MCF 10A (cell line): ENCODE measurements at regions of chr16 and their contacts with region 1.

Region 1: GRCh38 chr16:77171745-77172635 is 19.0 kb upstream of the MON1B start:
- DNase-seq: peak; percentile 77
- H3K4me3 Mint-ChIP-seq: no peak overlapping the region
- H3K27ac Mint-ChIP-seq: no peak overlapping the region
- H3K4me1 Mint-ChIP-seq: no peaks in the 10 kb centered on the region
- H3K27me3 Mint-ChIP-seq: no peaks in the 10 kb centered on the region
- CTCF ChIP-seq: peak; percentile 77

Region 2: GRCh38 chr16:75801307-75801706 is 1370.7 kb before region 1 on chr16:
- CTCF ChIA-PET with region 1: interaction called, 47 read pairs
- POLR2A ChIA-PET with region 1: no interaction called
- intact Hi-C with region 1: loop called (anchors 5 kb)
- DNase-seq: peak; percentile 22
- H3K4me3 Mint-ChIP-seq: no peak overlapping the region
- H3K27ac Mint-ChIP-seq: no peak overlapping the region
- H3K4me1 Mint-ChIP-seq: peaks cover 5% of the 10 kb centered on the region
- H3K27me3 Mint-ChIP-seq: no peaks in the 10 kb centered on the region
- CTCF ChIP-seq: peak; percentile 48

Region 3: DNA sequence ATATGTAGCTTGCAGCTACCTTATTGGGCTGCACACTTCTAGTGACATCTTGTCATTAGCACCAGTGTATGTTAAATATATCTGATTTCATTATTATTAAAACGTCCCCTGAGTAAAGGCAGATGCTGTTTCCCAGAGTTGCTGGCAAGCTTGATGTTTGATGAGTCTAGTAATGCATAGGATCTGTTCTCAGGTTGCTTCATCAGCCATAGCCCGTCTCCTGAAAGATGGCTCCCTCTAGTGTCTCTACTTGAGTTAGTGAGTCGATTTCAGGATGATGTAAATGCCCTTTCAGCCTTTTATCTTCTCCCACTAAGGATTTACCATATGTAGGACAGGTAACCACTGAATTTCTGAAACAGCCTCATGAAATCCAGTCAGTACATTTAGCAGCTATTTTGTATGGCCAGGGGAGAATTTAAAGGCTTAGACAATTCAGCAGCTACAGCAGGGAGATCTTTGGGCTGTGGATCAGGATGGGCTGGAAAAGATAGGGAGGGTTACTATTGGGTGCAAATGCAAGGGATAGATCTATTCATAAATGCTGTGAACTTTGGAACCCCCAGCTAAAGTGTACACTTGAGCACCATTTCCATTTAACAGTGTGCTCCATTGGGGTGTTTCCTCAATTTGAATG is 518.5 kb before region 1 on chr16:
- CTCF ChIA-PET with region 1: interaction called, 43 read pairs
- POLR2A ChIA-PET with region 1: no interaction called
- intact Hi-C with region 1: loop called (anchors 1 kb)
- DNase-seq: peak; percentile 79
- H3K4me3 Mint-ChIP-seq: no peak overlapping the region
- H3K27ac Mint-ChIP-seq: no peak overlapping the region
- H3K4me1 Mint-ChIP-seq: peaks cover 11% of the 10 kb centered on the region
- H3K27me3 Mint-ChIP-seq: no peaks in the 10 kb centered on the region
- CTCF ChIP-seq: peak; percentile 77

Region 4: DNA sequence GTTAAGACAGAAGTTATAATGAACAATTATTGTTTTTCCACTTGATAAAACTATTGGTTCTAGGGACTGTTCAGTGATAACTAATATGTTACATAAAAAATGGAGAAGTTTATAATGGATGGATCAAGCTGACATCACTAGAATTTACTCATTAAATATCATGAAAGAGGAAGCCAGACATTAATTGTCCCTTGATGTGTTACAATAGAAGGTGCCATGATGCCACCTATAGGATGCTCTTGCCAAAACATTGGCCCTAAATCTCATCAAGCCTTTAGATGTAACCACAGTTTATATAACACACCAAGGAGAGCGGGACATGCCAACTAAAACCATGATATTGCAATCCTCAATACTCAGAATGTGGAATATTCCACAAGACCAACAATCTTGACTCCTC is 128.9 kb before region 1 on chr16:
- CTCF ChIA-PET with region 1: interaction called, 35 read pairs
- POLR2A ChIA-PET with region 1: no interaction called
- intact Hi-C with region 1: loop called (anchors 1 kb)
- DNase-seq: peak; percentile 54
- H3K4me3 Mint-ChIP-seq: no peak overlapping the region
- H3K27ac Mint-ChIP-seq: no peak overlapping the region
- H3K4me1 Mint-ChIP-seq: no peaks in the 10 kb centered on the region
- H3K27me3 Mint-ChIP-seq: no peaks in the 10 kb centered on the region
- CTCF ChIP-seq: peak; percentile 36

Region 5: GRCh38 chr16:77090062-77090461 is 81.9 kb before region 1 on chr16:
- CTCF ChIA-PET with region 1: no interaction called
- POLR2A ChIA-PET with region 1: no interaction called
- intact Hi-C with region 1: no loop called
- DNase-seq: no peak
- H3K4me3 Mint-ChIP-seq: no peak overlapping the region
- H3K27ac Mint-ChIP-seq: no peak overlapping the region
- H3K4me1 Mint-ChIP-seq: peaks cover 5% of the 10 kb centered on the region
- H3K27me3 Mint-ChIP-seq: no peaks in the 10 kb centered on the region
- CTCF ChIP-seq: no peak

Region 6: GRCh38 chr16:77183137-77183536 is 11.1 kb after region 1 on chr16:
- CTCF ChIA-PET with region 1: interaction called, 31 read pairs
- POLR2A ChIA-PET with region 1: interaction called, 4 read pairs
- intact Hi-C with region 1: no loop called
- DNase-seq: peak; percentile 73
- H3K4me3 Mint-ChIP-seq: peak overlapping the region; percentile 25
- H3K27ac Mint-ChIP-seq: no peak overlapping the region
- H3K4me1 Mint-ChIP-seq: peaks cover 6% of the 10 kb centered on the region
- H3K27me3 Mint-ChIP-seq: no peaks in the 10 kb centered on the region
- CTCF ChIP-seq: no peak

Region 7: GRCh38 chr16:77223184-77223583 is 51.2 kb after region 1 on chr16:
- CTCF ChIA-PET with region 1: no interaction called
- POLR2A ChIA-PET with region 1: no interaction called
- intact Hi-C with region 1: no loop called
- DNase-seq: peak; percentile 42
- H3K4me3 Mint-ChIP-seq: no peak overlapping the region
- H3K27ac Mint-ChIP-seq: no peak overlapping the region
- H3K4me1 Mint-ChIP-seq: peaks cover 6% of the 10 kb centered on the region
- H3K27me3 Mint-ChIP-seq: no peaks in the 10 kb centered on the region
- CTCF ChIP-seq: peak; percentile 42

Region 8: GRCh38 chr16:78198288-78198687 is 1026.3 kb after region 1 on chr16:
- CTCF ChIA-PET with region 1: no interaction called
- POLR2A ChIA-PET with region 1: no interaction called
- intact Hi-C with region 1: no loop called
- DNase-seq: no peak
- H3K4me3 Mint-ChIP-seq: no peak overlapping the region
- H3K27ac Mint-ChIP-seq: no peak overlapping the region
- H3K4me1 Mint-ChIP-seq: no peaks in the 10 kb centered on the region
- H3K27me3 Mint-ChIP-seq: no peaks in the 10 kb centered on the region
- CTCF ChIP-seq: no peak